Posterior vena cava (tissue), 2 donors: ENCODE measurements at regions of chr2 and their contacts with region 1.

Region 1: GRCh38 chr2:37832590-37833197 is 92.4 kb upstream of the RMDN2 start:
- DNase-seq: peak; percentile 95

Region 2: GRCh38 chr2:37394796-37395555 is 437.7 kb before region 1 on chr2:
- intact Hi-C with region 1: loop called in 1 of 2 experiments (anchors 5 kb)
- DNase-seq: no peak

Region 3: DNA sequence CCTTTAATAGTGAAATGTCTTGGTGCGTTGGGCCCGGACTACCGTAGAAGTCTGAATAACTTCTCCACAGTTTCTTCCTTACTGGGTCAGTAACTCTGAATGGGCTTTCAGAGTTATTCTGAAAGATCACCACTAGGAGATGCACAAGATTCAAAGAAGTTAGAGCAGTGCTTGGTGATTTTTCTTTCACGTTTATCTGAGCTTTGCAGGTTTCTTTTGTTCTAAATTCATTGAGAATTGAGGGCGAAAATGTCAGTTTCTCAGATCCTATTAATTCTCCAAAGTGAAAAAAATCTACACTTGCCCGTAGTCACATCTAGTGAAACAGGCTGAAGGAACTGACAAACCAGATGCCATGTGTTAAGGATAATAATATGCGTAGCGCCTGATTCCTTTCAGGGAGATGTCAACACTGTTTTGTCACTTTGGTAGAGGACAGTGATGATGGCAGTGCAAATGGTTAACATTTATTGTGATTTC is 418.2 kb before region 1 on chr2:
- intact Hi-C with region 1: loop called in 1 of 2 experiments (anchors 5 kb)
- DNase-seq: no peak

Region 4: DNA sequence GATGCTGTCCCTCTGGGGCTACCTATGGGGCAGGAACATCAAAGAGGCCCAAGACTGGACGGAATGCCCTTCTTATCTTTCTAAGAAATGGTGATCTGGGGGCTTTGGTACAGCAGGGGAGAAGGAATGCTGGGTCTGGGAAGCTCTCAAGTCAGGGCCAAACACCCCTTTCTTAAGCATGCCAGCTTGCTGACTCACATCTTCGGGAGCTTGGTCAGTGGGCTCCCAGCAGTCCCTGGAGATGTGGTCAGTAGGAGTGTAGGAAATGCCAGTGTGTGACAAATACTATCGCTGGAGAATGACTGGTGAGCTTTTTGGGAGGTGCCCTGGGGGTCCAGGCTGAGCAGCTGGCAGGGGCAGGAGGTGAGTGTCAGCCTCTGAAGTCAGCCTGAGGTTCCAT is 56.2 kb before region 1 on chr2:
- intact Hi-C with region 1: loop called in 1 of 2 experiments (anchors 10 kb)
- DNase-seq: no peak

Region 5: GRCh38 chr2:37890893-37891495 is 58.3 kb after region 1 on chr2:
- intact Hi-C with region 1: loop called in 1 of 2 experiments (anchors 10 kb)
- DNase-seq: peak; percentile 91

Region 6: GRCh38 chr2:38030635-38031355 is 198.1 kb after region 1 on chr2:
- intact Hi-C with region 1: no loop called
- DNase-seq: no peak